Activated CD4-positive, alpha-beta memory T cell treated with anti-CD3 and anti-CD28 coated beads for 36 hours (primary cell): ENCODE measurements at regions of chr7 and their contacts with region 1.

Region 1: DNA sequence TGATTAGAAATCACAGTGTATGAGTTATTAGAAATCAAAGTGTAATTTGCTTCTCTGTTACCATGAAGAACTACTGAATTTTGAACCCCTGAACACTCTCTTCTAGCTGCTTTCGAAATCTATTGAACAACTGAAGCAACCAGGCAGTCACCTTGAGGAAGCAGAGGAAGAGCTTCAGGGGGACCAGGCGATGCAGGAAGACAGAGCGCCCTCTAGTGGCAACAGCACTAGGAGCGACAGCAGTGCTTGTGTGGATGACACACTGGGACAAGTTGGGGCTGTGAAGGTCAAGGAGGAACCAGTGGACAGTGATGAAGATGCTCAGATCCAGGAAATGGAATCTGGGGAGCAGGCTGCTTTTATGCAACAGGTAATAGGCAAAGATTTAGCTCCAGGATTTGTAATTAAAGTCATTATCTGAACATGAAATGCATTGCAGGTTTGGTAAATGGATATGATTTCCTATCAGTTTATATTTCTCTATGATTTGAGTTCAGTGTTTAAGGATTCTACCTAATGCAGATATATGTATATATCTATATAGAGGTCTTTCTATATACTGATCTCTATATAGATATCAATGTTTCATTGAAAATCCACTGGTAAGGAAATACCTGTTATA is 170.7 kb downstream of the HDAC9 start:
- DNase-seq: peak; percentile 69
- H3K4me3 Mint-ChIP-seq: no peak overlapping the region
- H3K27ac Mint-ChIP-seq: no peak overlapping the region
- H3K4me1 Mint-ChIP-seq: no peaks in the 10 kb centered on the region
- H3K27me3 Mint-ChIP-seq: no peaks in the 10 kb centered on the region

Region 2: GRCh38 chr7:17506095-17506494 is 1160.1 kb before region 1 on chr7:
- CTCF ChIA-PET with region 1: no interaction called
- POLR2A ChIA-PET with region 1: no interaction called
- intact Hi-C with region 1: loop called (anchors 10 kb)
- DNase-seq: no peak
- H3K4me3 Mint-ChIP-seq: no peak overlapping the region
- H3K27ac Mint-ChIP-seq: no peak overlapping the region
- H3K4me1 Mint-ChIP-seq: no peaks in the 10 kb centered on the region
- H3K27me3 Mint-ChIP-seq: no peaks in the 10 kb centered on the region

Region 3: GRCh38 chr7:18352339-18353255 is 313.6 kb before region 1 on chr7:
- CTCF ChIA-PET with region 1: interaction called, 22 read pairs
- POLR2A ChIA-PET with region 1: no interaction called
- intact Hi-C with region 1: loop called (anchors 1 kb)
- DNase-seq: peak; percentile 25
- H3K4me3 Mint-ChIP-seq: no peak overlapping the region
- H3K27ac Mint-ChIP-seq: no peak overlapping the region
- H3K4me1 Mint-ChIP-seq: peaks cover 3% of the 10 kb centered on the region
- H3K27me3 Mint-ChIP-seq: peaks cover 3% of the 10 kb centered on the region

Region 4: GRCh38 chr7:18590744-18591340 is 75.4 kb before region 1 on chr7:
- CTCF ChIA-PET with region 1: interaction called, 12 read pairs
- POLR2A ChIA-PET with region 1: no interaction called
- intact Hi-C with region 1: loop called (anchors 2 kb)
- DNase-seq: no peak
- H3K4me3 Mint-ChIP-seq: no peak overlapping the region
- H3K27ac Mint-ChIP-seq: no peak overlapping the region
- H3K4me1 Mint-ChIP-seq: no peaks in the 10 kb centered on the region
- H3K27me3 Mint-ChIP-seq: no peaks in the 10 kb centered on the region

Region 5: GRCh38 chr7:18610331-18610948 is 55.8 kb before region 1 on chr7:
- CTCF ChIA-PET with region 1: no interaction called
- POLR2A ChIA-PET with region 1: no interaction called
- intact Hi-C with region 1: no loop called
- DNase-seq: no peak
- H3K4me3 Mint-ChIP-seq: no peak overlapping the region
- H3K27ac Mint-ChIP-seq: no peak overlapping the region
- H3K4me1 Mint-ChIP-seq: no peaks in the 10 kb centered on the region
- H3K27me3 Mint-ChIP-seq: no peaks in the 10 kb centered on the region

Region 6: DNA sequence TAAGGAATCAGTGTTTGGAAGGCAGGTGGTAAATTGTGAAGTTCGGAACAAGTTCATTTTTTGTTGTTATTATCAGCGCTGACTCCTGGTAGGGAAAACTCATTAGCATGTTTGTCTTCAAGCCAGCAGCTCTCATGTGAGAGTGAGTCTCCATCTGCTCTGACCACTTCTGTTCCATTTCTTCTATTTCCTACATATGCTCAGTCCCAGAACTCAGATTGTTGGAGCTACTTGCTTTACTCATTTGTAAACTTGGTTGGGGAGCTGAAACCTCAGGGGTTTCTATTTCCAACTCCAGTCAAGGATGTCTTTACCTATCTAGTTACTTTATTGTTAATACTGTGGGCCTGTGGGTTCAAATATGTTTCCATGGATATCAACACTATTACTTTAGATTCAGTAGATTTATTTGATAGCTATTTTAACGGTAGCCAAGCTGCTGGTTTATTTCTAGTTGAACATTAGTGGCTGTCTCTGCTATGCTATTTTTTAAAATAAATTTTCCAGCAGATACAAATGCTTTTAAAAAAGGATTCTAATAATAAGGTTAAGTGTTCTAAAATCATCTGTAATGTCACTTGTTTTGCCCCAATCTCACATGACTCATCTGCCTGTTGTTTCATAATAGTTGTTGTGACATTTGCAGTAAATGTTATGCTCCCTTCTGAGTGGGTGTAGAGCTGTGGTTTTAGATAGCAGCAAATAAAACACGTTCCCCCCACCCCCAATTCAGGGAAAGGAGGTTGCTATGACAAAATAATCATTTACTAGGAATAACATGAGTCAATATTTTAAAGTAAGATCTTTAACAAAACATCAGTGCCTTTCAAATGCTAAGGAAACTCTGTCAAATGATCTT is 27.4 kb before region 1 on chr7:
- CTCF ChIA-PET with region 1: no interaction called
- POLR2A ChIA-PET with region 1: no interaction called
- intact Hi-C with region 1: no loop called
- DNase-seq: peak; percentile 17
- H3K4me3 Mint-ChIP-seq: no peak overlapping the region
- H3K27ac Mint-ChIP-seq: peak overlapping the region; percentile 69
- H3K4me1 Mint-ChIP-seq: no peaks in the 10 kb centered on the region
- H3K27me3 Mint-ChIP-seq: no peaks in the 10 kb centered on the region